Right cardiac atrium (tissue), 5 donors: ENCODE measurements at regions of chr4 and their contacts with region 1.

Region 1: GRCh38 chr4:106502106-106502699 is 133.6 kb upstream of the GIMD1 start:
- DNase-seq: peak; percentile 42 to 69 (median 68)
- ATAC-seq: peak; percentile 57
- H3K4me3 ChIP-seq: no peak overlapping the region
- H3K27ac ChIP-seq: no peak overlapping the region
- H3K4me1 ChIP-seq: no peaks in the 10 kb centered on the region
- H3K27me3 ChIP-seq: no peaks in the 10 kb centered on the region

Region 2: DNA sequence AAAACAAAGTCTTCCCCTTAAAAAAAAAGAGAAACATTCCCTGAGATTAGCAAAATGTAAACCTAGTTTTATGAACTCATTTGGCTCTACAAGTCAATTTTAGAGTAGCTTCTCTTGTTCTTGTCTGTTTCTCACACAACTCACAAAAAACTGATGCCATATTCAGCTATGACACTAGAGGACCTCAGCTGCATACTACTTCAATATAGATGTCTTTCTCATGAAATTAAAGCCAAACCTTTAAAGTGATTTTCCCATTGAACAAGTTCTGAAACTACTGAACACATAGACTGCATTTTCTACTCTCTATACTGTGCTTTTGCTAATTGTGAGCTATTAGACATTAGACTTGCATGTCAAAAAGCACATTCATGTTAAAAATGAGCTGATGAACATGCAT is 236.0 kb before region 1 on chr4:
- intact Hi-C with region 1: loop called in 1 of 4 experiments (anchors 10 kb)
- DNase-seq: no peak
- ATAC-seq: no peak
- H3K4me3 ChIP-seq: no peak overlapping the region
- H3K27ac ChIP-seq: no peak overlapping the region
- H3K4me1 ChIP-seq: peaks cover 1% of the 10 kb centered on the region
- H3K27me3 ChIP-seq: no peaks in the 10 kb centered on the region

Region 3: DNA sequence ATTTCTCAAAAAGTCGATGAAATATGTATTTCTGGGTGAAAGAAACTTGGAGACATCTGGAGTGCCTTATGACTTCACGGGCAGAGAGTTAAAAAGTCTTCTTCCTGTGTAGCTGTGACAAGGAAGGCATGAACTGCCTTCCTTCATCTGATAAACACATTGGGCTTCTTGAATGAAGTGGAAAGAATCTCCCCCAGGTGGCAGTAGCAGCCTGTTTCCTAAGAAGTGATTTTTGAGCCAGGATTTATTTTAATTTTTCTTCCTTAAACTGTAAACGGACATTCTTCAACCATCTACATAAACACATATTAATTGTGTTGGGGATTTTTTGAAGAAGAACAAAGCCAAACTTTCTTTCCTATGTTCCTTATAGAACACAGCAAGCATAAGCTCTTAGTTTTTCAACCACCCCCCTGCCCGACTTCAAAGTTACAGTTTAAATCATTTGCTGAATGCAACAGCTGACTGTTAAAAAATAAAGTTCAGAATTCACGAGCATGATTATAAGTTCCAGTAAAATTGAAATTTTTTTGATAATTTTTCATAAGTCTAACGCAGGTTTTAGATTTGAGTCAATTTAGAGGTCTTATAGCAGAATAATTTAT is 132.6 kb before region 1 on chr4:
- intact Hi-C with region 1: loop called in 2 of 4 experiments (anchors 5 kb)
- DNase-seq: no peak
- ATAC-seq: no peak
- H3K4me3 ChIP-seq: no peak overlapping the region
- H3K27ac ChIP-seq: no peak overlapping the region
- H3K4me1 ChIP-seq: no peaks in the 10 kb centered on the region
- H3K27me3 ChIP-seq: no peaks in the 10 kb centered on the region